Right ventricle myocardium inferior (tissue), 1 donor: ENCODE measurements at regions of chr9 and their contacts with region 1.

Region 1: DNA sequence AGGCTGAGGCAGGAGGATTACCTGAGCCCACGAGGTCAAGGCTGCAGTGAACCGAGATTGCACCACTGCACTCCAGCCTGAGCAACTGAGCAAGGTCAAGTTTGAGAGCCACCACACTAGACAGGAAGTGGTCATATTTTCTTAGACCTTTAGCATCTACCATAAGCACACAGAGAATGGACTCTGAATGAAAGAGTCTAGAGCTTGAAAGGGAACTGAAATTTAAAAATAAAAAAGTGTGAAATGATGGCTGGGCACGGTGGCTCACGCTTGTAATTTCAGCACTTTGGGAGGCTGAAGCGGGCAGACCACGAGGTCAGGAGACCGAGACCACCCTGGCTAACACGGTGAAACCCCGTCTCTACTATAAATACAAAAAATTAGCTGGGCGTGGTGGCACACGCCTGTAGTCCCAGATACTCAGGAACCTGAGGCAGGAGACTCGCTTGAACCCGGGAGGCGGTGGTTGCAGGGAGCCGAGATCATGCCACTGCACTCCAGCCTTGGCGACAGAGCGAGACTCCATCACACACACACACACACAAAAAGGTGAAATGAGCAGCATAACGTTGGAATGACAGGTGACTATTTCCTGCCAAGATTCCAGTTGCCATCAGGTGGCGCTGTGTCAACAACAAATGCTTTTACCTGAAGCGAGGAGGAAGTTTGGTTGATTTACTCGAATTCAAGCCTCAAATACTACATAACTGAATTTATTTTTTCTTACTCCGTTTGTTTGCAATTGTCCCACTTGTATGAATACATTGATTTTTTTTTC is 21.3 kb upstream of the AK3 start:
- DNase-seq: no peak
- ATAC-seq: peak; percentile 45

Region 2: DNA sequence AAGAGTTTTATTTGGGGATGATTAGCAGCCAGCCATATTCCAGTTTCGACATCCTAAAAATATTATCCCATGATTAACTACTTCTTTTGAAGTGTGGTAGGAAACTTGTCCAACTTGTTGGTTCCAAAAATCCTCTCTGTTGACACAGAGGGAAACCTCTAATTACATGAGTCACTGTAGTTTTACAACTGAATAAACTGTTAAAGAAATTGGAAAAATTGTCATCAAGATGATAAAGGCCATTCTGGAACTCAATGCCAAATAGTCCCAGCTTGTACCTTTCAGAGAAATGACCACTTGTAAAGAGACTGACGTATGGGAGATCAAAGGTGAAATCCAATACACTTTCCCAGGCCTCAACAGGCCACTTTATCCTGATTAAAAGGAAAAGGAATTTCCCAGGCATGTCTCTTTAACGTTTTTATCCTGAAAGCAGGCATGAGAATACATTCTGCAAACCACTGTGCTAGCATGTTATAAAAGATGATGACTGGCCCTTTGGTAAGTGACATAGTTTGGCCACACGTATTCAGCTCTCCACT is 724.0 kb before region 1 on chr9:
- intact Hi-C with region 1: no loop called
- DNase-seq: no peak
- ATAC-seq: peak; percentile 37

Region 3: DNA sequence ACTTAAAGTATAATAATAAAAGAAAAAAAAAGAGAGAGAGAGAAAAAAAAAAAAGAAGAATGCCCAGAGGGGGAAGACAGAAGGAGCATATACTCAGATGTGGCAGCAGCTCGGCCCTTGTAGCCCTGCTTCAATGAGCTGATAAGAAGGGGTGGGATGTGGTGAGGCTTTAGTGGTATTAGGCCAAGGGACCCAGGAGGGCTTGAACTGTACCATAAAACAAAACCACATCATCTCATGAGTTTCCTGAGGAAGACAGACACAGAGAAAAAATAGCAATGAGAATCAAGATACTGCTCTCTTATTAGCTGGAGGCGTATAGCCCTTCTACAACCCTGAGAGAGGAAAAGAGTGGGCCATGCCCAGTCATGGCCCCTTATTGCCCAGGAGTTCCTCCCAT is 199.2 kb before region 1 on chr9:
- intact Hi-C with region 1: no loop called
- DNase-seq: no peak
- ATAC-seq: no peak

Region 4: DNA sequence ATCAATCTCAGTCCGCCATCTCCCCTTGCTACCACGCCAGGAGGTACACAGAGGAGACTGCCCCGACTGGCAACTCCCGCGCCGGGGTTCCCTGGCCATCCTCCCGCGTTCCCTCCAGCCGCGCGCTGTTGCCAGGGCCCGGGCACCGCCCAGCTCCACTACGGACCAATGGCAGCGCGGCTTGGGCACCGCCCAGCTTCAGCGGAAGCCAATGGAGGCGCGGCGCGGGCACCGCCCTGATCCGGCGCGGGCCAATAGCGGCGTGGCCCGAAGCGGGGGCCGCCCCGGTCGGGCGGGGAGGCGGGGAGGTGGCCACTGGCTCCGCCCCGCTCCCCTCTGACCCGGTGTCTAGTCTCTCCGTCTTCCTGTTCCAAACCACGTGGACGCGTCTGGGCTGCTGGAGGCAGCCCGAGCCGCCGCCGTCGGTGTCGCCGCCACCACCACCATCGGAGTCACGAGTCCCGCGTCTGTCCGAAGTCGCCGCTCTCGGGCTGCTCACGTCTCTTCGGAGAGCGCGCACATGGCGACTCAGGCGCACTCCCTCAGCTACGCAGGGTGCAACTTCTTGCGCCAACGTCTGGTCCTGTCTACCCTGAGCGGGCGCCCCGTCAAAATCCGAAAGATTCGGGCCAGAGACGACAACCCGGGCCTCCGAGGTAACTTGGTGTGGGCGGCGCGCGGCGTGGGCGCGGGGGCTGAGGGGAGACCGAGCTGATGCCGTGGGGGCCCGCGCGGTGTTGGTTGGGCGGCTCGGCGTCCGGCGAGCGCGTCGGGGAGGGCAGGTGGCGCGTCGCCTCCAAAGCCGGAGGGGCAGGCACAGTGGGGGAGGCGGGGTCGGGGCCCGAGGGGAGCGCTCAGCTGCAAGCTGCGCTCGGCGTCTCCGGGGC is 30.5 kb after region 1 on chr9 and contains the start of gene RCL1:
- intact Hi-C with region 1: loop called (anchors 5 kb)
- DNase-seq: peak; percentile 98
- ATAC-seq: peak; percentile 99
- total RNA-seq, gene RCL1: 5.0 TPM

Region 5: GRCh38 chr9:4923580-4924544 is 161.6 kb after region 1 on chr9:
- intact Hi-C with region 1: loop called (anchors 5 kb)
- DNase-seq: no peak
- ATAC-seq: no peak